Ovary (tissue), 10 donors: ENCODE measurements at regions of chr9 and their contacts with region 1.

Region 1: DNA sequence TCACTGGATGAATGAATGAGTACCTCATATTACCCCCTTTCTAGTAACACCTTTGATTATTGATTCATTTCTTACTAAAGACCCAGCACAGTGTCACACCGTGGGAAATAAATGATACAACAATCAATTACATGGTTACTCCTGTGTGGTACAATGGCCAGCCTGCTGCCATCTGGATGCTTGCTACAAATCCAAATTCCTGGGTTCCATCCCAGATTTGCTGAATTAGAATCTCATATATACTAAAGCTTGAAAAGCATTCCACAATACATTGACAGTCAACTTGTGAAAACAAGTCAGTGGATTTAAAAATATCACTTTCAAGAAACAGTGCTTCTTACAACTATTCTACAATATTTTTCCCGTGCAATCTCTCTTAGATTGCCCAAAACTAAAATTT is 989.3 kb downstream of the PTPRD start:
- DNase-seq: no peak
- H3K4me3 ChIP-seq: no peak overlapping the region
- H3K27ac ChIP-seq: no peak overlapping the region
- H3K4me1 ChIP-seq: no peaks in the 10 kb centered on the region
- H3K27me3 ChIP-seq: no peaks in the 10 kb centered on the region
- CTCF ChIP-seq: no peak
- EP300 ChIP-seq: no peak
- POLR2A ChIP-seq: no peak

Region 2: DNA sequence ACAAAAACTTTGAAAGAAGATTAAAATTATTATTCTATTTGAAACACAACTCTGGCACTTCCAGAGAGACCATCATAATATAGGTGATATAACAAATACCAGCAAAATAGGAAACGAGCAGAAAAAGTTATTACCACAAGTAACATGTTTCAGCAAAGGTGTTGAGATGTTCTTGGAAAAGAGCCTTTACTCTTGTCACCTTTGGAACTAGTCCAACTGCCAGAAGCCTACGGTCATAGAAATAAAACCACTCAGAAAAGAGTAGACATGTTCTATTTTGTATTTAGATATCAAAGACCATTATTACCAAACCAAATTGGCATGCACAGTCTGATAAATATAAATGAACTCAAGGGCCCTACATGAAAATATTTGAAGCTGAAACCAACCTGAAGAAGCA is 1678.9 kb before region 1 on chr9:
- intact Hi-C with region 1: loop called in 1 of 4 experiments (anchors 5 kb)
- DNase-seq: no peak
- H3K4me3 ChIP-seq: no peak overlapping the region
- H3K27ac ChIP-seq: no peak overlapping the region
- H3K4me1 ChIP-seq: no peaks in the 10 kb centered on the region
- H3K27me3 ChIP-seq: no peaks in the 10 kb centered on the region
- CTCF ChIP-seq: no peak
- EP300 ChIP-seq: no peak
- POLR2A ChIP-seq: no peak

Region 3: GRCh38 chr9:10238087-10238486 is 614.6 kb after region 1 on chr9:
- intact Hi-C with region 1: no loop called
- DNase-seq: no peak
- H3K4me3 ChIP-seq: no peak overlapping the region
- H3K27ac ChIP-seq: no peak overlapping the region
- H3K4me1 ChIP-seq: no peaks in the 10 kb centered on the region
- H3K27me3 ChIP-seq: no peaks in the 10 kb centered on the region
- CTCF ChIP-seq: no peak
- EP300 ChIP-seq: no peak
- POLR2A ChIP-seq: no peak